ENCODE measurements at regions of chr20 and their contacts with region 1.

Region 1: DNA sequence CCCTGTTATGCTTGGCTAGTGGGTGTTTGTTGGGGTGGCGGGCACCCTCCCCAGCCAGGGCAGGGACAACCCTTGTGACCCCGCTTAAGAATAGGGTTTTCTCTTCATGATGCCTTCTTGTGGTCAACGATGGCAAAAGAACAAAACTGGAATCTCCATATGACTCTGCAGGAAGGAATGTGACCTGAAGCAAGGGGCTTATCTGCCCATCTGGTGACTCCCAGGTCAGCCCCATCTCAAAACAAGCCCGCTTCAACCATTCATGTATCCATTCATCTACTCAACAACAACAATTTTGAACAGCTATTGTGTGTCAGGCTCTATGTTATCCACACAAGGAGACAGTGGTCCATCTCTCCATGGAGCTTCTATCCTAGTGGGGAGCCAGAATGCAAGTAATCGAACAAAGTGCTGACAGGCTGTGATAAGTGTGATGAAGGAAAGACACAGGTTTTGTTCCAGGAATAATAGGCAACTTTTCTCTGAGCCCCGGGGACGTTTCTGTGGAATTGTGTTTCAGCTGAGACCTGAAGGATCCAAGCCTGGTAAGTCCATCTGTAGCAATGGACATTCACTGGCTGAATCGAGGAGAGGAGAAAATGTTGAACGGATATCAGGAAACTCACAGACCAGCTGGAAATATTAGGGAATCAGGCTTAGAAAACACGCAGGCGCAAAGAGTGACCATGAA is 30.7 kb upstream of the TGM6 start:
- DNase-seq: no peak
- H3K4me3 ChIP-seq: no peak overlapping the region
- H3K27ac ChIP-seq: no peak overlapping the region
- H3K4me1 ChIP-seq: no peaks in the 10 kb centered on the region
- H3K27me3 ChIP-seq: no peaks in the 10 kb centered on the region
- CTCF ChIP-seq: no peak
- EP300 ChIP-seq: no peak
- POLR2A ChIP-seq: no peak
- RAD21 ChIP-seq: no peak

Region 2: GRCh38 chr20:2237059-2237458 is 112.9 kb before region 1 on chr20:
- CTCF ChIA-PET with region 1: interaction called, 14 read pairs
- POLR2A ChIA-PET with region 1: no interaction called
- DNase-seq: no peak
- H3K4me3 ChIP-seq: no peak overlapping the region
- H3K27ac ChIP-seq: no peak overlapping the region
- H3K4me1 ChIP-seq: peaks cover 5 to 13% (median 9%) of the 10 kb centered on the region in 4 experiments
- H3K27me3 ChIP-seq: no peaks in the 10 kb centered on the region
- CTCF ChIP-seq: peak; percentile 37 to 51 (median 42); a peak in 3 of 4 replicates
- EP300 ChIP-seq: no peak
- POLR2A ChIP-seq: no peak
- RAD21 ChIP-seq: peak; percentile 35 to 54; a peak in 3 of 4 replicates

Region 3: GRCh38 chr20:2402271-2402980 is 52.5 kb after region 1 on chr20:
- CTCF ChIA-PET with region 1: interaction called, 11 read pairs
- POLR2A ChIA-PET with region 1: no interaction called
- DNase-seq: no peak
- H3K4me3 ChIP-seq: no peak overlapping the region
- H3K27ac ChIP-seq: no peak overlapping the region
- H3K4me1 ChIP-seq: 0 out of 7 replicates have a peak, but pooled peaks cover 0 to 2% (median 0%) of the 10 kb centered on the region in 4 experiments
- H3K27me3 ChIP-seq: no peaks in the 10 kb centered on the region
- CTCF ChIP-seq: peak in 2 of 3 experiments; percentile 18 to 39; a peak in 2 of 4 replicates
- EP300 ChIP-seq: no peak
- POLR2A ChIP-seq: no peak
- RAD21 ChIP-seq: peak; percentile 15 to 24; a peak in 2 of 4 replicates